Heart left ventricle (tissue), 16 donors: ENCODE measurements at regions of chr7 and their contacts with region 1.

Region 1: DNA sequence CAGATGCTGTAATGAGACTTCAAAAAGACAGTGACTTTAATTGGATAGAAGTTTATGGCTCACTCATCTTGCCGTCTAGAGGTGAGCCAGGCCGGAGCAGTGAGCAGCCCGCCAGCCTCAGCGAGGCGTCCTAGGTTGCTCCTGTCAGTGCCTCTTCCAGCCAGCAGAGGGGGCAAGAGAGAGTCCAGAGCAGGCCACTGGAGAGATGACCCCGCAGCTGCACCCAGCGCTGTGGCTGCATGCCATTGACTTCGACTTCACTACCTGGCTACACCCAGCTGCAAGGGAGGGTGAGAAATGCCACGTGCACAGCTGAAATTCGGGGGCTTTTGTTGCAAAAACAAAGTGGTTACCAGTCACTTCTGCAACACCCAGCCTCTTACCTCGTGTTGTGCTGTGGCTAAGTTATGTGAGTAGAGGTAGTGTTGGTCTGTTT is 26.5 kb downstream of the NUB1 start:
- DNase-seq: peak; percentile 79 to 88 (median 85)
- ATAC-seq: peak; percentile 84 to 97 (median 96)
- H3K4me3 ChIP-seq: no peak overlapping the region
- H3K27ac ChIP-seq: peak overlapping the region in 1 of 12 donors; percentile 63
- H3K4me1 ChIP-seq: peaks cover 0 to 17% (median 6%) of the 10 kb centered on the region in 12 donors
- H3K27me3 ChIP-seq: no peaks in the 10 kb centered on the region
- CTCF ChIP-seq: peak; percentile 91 to 98 (median 95)
- POLR2A ChIP-seq: no peak

Region 2: DNA sequence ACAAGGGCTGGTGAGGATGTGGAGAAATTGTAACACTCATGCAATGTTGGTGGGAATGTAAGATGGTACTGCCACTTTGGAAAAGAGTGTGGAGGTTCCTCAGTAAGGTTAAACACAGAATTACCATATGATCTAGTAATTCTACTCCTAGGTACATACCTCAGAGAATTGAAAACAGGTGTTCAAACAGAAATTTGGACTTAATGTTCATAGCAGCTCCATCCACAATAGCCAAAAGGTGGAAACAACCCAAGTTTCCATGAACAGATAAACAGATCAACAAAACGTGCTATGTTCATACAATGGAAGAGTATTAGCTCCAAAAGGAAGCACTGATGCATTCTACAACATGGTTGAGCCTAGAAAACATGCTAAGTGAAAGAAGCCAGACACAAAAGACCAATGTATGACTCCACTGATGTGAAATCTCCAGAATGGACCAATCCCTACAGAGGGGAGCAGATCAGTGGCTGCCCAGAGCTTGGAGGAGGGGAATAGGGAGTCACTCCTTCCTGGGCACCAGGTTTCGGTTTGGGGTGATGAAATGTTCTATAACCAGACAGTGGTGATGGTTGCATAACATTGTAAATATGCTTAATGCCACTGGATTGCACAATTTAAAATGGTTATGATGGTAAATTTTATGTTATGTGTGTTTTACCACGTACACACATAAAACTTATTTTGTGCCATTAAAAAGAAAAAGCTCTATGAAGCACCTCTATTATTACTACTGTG is 47.4 kb after region 1 on chr7:
- intact Hi-C with region 1: no loop called
- DNase-seq: no peak
- ATAC-seq: no peak
- H3K4me3 ChIP-seq: no peak overlapping the region
- H3K27ac ChIP-seq: no peak overlapping the region
- H3K4me1 ChIP-seq: peaks cover 0 to 23% (median 0%) of the 10 kb centered on the region in 12 donors
- H3K27me3 ChIP-seq: peaks cover 0 to 45% (median 10%) of the 10 kb centered on the region in 9 donors
- CTCF ChIP-seq: no peak
- POLR2A ChIP-seq: no peak

Region 3: DNA sequence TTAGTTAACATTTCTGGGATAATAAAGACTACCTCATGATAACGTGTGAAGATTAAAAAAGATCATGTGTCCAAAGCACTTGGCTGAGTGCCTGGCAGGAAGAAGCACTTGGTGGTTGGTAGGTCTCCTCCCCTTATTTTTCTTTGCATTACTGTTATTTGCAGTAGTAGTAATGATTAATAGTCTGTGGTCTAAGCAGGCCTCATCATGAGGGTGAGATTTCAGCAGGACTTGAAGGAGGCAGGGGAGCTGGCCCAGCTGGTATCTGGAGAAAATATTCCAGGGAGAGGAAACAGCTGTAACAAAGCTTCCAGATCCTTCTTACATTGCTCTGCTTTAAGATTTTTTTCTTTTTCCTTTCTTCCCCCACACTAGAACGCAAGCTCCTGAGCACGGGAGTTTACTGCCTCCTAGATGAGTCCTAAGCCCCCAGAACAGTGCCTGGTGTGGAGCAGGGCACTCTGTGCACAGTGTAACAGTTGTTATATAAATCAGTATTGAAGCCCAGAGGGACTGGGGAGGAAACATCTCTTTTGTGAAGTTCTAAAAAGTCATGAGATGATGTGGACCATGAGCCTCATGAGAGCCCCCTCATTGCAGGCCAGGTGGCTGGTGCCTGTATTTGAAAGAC is 182.6 kb after region 1 on chr7:
- intact Hi-C with region 1: loop called in 1 of 10 experiments (anchors 10 kb)
- DNase-seq: no peak
- ATAC-seq: no peak
- H3K4me3 ChIP-seq: no peak overlapping the region
- H3K27ac ChIP-seq: no peak overlapping the region
- H3K4me1 ChIP-seq: peaks cover 0 to 12% (median 3%) of the 10 kb centered on the region in 12 donors
- H3K27me3 ChIP-seq: no peaks in the 10 kb centered on the region
- CTCF ChIP-seq: no peak
- POLR2A ChIP-seq: no peak